Mammary epithelial cell (primary cell): ENCODE measurements at regions of chr22 and their contacts with region 1.

Region 1: DNA sequence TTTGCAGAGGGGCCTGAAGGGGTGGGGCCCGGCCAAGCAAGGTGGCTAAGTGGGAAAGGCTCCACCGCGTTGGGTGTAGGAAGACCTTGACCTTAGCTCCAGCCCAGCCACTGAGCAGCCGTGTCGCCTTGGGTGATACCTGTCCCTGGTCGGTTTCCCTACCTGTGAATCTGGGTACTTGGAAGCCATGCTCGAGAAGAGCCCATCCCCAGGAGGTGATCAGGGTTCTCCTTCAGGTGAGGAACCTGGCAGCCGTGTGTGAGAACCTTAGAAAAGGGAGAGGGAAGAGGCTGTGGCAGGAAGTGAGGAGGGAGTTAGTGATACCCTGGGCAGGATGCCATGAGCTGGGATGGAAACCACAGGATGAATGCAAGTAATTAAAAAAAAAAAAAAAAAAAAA is 21.6 kb downstream of the PPARA start:
- DNase-seq: peak; percentile 92
- H3K4me3 ChIP-seq: no peak overlapping the region
- H3K27ac ChIP-seq: no peak overlapping the region
- H3K4me1 ChIP-seq: peaks cover 16% of the 10 kb centered on the region
- H3K27me3 ChIP-seq: no peaks in the 10 kb centered on the region
- CTCF ChIP-seq: no peak

Region 2: DNA sequence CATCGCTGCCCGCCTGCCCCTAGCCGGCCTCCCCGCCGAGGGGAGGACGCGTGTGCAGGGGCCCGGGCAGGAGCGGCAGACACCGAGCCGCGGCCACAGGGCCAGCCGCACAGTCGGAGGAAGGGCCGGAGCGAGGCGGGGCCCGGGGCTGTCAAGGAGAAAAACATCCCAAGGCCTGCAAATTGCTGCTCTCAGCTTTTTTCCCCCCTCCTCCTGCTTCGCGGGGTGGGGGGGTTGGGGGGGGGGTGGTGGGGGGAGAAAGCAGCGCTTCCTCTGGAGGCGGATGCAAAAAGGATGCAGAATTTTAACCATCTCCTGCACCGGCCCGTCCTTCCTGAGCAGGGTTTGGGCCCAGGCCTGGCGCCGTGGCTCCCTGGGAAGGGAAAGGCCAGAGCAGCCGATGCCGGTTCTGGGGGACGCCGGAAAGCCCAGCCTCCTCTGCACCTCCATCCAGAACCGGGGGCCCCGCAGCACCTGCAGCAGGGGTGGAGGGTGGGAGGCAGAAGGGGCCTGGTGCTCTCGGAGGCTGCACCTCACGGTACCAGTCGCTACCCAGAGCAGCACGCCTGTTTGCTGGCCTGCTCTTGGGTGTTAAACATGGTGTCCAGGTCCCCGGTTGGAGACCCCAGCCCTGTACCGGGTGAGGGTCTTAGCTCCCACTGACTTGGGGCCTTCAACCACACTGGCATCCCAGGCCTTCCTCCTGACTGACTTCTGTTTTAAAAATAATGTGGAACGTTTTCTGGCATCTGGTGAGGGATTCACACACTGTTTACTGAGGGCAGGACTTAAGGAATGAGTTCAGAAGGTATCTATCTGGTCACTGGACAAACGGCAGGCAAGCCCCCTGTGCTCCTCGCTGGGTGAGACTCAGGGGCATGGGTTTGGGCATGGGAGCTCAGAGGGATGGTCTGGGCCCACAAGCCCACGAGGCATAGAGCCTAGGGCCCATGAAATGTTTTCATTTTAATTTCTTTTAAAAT is 117.6 kb before region 1 on chr22:
- CTCF ChIA-PET with region 1: no interaction called
- dilution Hi-C with region 1: no loop called
- in situ Hi-C with region 1: no loop called
- intact Hi-C with region 1: no loop called
- DNase-seq: peak; percentile 39
- H3K4me3 ChIP-seq: peak overlapping the region; percentile 59 to 78 (median 72)
- H3K27ac ChIP-seq: peak overlapping the region; percentile 87
- H3K4me1 ChIP-seq: peaks cover 81% of the 10 kb centered on the region
- H3K27me3 ChIP-seq: no peaks in the 10 kb centered on the region
- CTCF ChIP-seq: no peak

Region 3: DNA sequence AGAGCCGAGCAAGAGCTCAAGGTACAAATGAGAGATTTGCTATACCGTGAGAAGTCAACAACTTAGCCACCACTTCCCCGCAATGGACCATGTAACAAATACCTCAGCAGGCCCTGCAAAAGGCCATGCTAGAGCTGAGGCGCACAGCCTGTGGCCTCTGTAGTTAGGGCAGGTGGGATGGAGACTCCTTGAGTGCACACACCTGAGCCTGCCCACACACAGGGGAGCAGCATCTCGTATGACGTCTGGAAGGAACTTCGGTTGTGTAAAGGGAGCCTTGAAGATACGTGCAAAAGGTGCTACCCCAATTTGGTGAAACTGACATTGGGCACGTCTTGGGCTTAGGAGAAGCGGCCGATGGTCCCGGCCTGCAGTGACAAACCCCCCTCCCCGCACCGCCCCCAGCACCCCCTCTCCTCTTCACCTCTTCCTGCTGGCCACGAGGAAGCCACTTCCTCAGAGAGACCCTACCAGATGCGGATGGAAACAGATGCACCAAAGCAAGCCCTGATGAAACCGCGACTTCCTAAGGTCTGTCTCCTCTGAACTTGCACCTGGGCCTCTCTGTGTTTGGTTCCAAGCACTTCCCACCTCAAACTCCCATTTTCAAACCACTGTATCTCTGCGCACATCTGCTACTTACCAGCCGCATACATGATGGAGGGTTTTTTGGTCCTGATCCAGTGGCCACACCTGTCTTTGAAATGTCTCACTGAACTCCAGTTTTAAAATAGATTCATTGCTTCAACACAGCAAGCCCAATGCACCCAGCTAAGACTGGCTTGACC is 67.5 kb after region 1 on chr22:
- CTCF ChIA-PET with region 1: no interaction called
- dilution Hi-C with region 1: no loop called
- in situ Hi-C with region 1: no loop called
- intact Hi-C with region 1: loop called (anchors 5 kb)
- DNase-seq: no peak
- H3K4me3 ChIP-seq: no peak overlapping the region
- H3K27ac ChIP-seq: no peak overlapping the region
- H3K4me1 ChIP-seq: no peaks in the 10 kb centered on the region
- H3K27me3 ChIP-seq: no peaks in the 10 kb centered on the region
- CTCF ChIP-seq: no peak